AG04450 (cell line): ENCODE measurements at regions of chr16 and their contacts with region 1.

Region 1: GRCh38 chr16:6629110-6629509 is 703.5 kb upstream of the RBFOX1 start:
- DNase-seq: no peak
- H3K4me3 ChIP-seq: no peak overlapping the region
- H3K27ac ChIP-seq: no peak overlapping the region
- H3K27me3 ChIP-seq: no peaks in the 10 kb centered on the region
- CTCF ChIP-seq: no peak

Region 2: DNA sequence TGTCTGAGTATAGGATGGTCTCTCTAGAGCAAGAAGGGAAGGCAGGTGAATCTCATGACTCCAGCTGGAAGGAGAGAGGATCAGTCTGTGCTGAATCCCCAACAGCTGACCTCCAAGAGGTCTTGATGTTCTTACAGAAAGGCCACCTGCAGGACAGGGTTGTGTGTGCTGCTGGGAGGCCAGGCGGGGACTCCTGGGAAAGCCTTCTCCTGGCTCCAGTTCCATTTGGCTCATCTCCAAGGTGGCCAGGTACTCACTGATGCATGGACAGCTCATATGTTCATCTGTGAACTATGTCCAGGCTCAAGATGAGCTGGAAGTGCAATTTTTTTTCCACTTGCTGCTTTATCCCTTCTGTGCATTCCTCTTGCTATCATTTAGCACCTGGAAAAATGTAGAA is 26.7 kb before region 1 on chr16:
- CTCF ChIA-PET with region 1: no interaction called
- POLR2A ChIA-PET with region 1: no interaction called
- DNase-seq: no peak
- H3K4me3 ChIP-seq: no peak overlapping the region
- H3K27ac ChIP-seq: no peak overlapping the region
- H3K27me3 ChIP-seq: no peaks in the 10 kb centered on the region
- CTCF ChIP-seq: no peak

Region 3: DNA sequence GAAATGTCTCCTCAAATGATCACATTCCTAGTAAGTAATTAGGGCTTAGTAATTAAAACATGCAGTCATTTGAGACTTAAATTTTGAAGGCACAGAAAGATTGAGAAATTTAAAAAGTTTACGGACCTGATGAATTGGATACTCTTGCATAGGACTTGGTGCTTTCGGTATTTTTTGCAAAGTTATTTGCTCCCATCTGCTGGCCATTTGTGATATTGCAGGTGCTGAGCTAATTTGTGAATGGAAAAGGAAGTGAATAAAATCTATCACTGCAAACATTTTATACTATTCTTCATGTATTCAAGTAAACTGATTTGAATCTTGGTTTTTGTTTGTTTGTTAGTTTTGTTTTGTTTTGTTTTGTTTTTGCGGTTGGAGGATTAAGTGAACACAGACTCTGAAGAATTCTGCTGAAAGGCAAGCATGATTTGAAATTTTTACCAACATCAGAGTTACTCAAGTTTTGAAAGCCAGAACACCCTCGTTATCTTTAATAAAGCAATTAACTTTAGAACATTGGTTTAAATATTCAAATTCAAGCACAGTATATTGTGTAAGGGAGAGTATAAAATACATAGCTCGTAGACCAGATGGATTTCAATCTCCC is 14.1 kb after region 1 on chr16:
- CTCF ChIA-PET with region 1: interaction called, 14 read pairs
- POLR2A ChIA-PET with region 1: no interaction called
- DNase-seq: peak; percentile 1
- H3K4me3 ChIP-seq: no peak overlapping the region
- H3K27ac ChIP-seq: no peak overlapping the region
- H3K27me3 ChIP-seq: no peaks in the 10 kb centered on the region
- CTCF ChIP-seq: peak; percentile 80